HEK293T (cell line): ENCODE measurements at regions of chr11 and their contacts with region 1.

Region 1: DNA sequence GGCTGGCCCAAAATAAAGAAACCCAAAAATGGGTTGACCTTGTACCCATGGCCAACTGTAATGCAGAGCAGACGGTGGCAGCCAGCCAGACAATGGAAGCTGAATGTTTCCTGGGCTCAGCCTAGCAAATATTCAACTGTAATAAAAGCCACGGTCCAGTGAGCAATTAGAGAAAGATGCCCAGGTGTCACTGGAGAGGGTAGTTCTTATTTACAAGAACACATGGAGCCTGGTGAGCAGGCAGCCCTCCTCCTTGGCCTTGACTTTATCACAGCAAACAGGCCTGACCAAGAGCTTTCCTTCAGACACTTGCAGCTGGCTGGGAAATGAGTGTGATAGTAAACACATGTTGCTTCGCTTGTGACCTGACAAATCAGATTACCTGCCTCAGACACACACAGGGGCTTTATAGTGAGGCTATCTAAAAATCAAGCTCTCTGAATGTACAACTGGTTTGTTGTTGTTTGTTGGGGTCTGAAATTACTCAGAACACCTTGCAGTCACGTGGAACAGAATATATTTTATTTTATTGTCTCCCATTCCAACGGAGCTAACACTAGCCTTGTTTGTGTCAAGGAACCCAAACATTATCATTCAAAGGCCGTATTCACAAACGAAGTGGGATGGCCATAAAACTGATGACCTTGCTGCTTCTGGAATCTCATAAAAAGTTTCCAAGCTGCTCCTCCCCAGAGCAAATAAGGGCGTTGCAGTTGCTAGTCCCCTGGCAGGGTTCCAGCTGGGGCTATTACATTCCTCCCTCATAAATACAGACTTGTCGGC is 161.0 kb downstream of the BBOX1 start:
- DNase-seq: peak; percentile 82

Region 2: GRCh38 chr11:26599421-26599820 is 602.2 kb before region 1 on chr11:
- CTCF ChIA-PET with region 1: no interaction called
- POLR2A ChIA-PET with region 1: no interaction called
- DNase-seq: no peak

Region 3: GRCh38 chr11:27183672-27184457 is 17.8 kb before region 1 on chr11:
- CTCF ChIA-PET with region 1: no interaction called
- POLR2A ChIA-PET with region 1: no interaction called
- DNase-seq: peak; percentile 43

Region 4: GRCh38 chr11:27213232-27213660 is 11.6 kb after region 1 on chr11:
- CTCF ChIA-PET with region 1: interaction called, 11 read pairs
- POLR2A ChIA-PET with region 1: interaction called, 8 read pairs
- DNase-seq: no peak

Region 5: DNA sequence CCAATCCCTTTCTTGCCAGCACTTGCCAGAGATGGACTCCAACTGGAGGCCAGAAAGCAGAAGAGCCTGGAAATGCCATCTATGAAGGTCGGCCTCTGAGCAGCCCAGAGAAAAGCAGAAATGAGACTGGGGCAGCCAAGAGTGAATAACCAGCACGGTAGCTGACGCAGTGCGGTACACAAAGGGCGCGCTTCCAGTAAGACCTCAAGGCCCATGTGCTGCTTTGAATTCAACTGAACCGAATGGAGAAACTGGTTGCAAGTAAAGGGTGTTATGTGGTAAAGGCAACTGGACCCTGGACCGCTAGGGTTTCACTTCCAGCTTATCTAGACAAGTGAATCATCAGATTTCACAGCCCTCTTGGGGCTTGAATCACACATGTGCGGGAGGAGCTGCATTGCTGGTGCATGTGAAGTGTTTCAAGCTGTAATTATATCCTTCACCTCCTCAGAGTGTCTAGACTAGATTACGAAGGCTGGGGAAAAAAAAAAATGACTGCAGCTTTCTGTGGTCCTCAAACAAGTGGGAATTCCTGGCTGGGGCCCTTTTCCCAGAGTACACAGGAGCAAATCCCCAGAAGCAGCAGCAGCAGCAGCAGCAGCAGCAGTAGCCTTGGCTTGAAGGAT is 32.5 kb after region 1 on chr11:
- CTCF ChIA-PET with region 1: no interaction called
- POLR2A ChIA-PET with region 1: interaction called, 12 read pairs
- DNase-seq: peak; percentile 57